ENCODE measurements at regions of chr18 and their contacts with region 1.

Region 1: DNA sequence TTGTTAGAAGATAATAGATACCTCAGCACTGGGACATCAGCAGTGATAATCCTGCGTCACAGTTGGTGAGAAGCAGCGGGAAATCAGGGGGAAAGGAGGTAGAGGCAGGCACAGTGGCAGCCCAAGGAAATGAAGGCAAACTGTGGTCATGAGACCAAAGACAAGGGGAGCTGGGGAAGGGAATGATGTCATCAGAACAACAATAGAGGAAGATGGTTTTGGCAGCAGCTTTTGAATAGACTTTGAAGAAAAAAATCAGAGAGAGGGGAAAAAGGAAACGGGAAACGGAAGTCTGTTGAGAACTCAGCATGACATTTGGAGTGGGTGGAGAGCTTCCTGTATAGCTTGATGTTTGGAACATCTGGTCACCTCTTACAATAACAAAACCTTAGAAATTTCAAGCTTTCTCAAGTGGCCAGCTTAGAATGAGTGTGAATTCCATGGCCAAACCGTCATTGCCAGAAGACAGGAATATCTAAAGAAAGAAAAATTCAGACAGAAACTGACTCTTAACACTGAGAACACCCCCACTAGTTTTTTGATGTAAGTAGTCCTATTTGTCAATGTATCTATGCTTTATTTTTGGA is 18.4 kb upstream of the YES1 start:
- DNase-seq: peak in 1 of 2 donors; percentile 80
- ATAC-seq: peak; percentile 63 to 67 (median 65)
- H3K4me3 ChIP-seq: no peak overlapping the region
- H3K4me3 Mint-ChIP-seq: peak overlapping the region; percentile 58
- H3K27ac ChIP-seq: peak overlapping the region; percentile 46
- H3K27ac Mint-ChIP-seq: peak overlapping the region; percentile 78 to 87
- H3K4me1 ChIP-seq: peaks cover 14% of the 10 kb centered on the region
- H3K4me1 Mint-ChIP-seq: peaks cover 13 to 14% of the 10 kb centered on the region in 2 donors
- H3K27me3 ChIP-seq: no peaks in the 10 kb centered on the region
- H3K27me3 Mint-ChIP-seq: peaks cover 0 to 3% of the 10 kb centered on the region in 2 donors
- CTCF ChIP-seq: no peak

Region 2: GRCh38 chr18:623761-624620 is 206.4 kb before region 1 on chr18:
- intact Hi-C with region 1: loop called (anchors 2 kb)
- DNase-seq: peak; percentile 31 to 76
- ATAC-seq: peak; percentile 54 to 81 (median 72)
- H3K4me3 ChIP-seq: no peak overlapping the region
- H3K4me3 Mint-ChIP-seq: no peak overlapping the region
- H3K27ac ChIP-seq: no peak overlapping the region
- H3K27ac Mint-ChIP-seq: no peak overlapping the region
- H3K4me1 ChIP-seq: no peaks in the 10 kb centered on the region
- H3K4me1 Mint-ChIP-seq: no peaks in the 10 kb centered on the region
- H3K27me3 ChIP-seq: no peaks in the 10 kb centered on the region
- H3K27me3 Mint-ChIP-seq: peaks cover 7 to 12% of the 10 kb centered on the region in 2 donors
- CTCF ChIP-seq: peak; percentile 66

Region 3: GRCh38 chr18:697800-698199 is 132.6 kb before region 1 on chr18:
- intact Hi-C with region 1: no loop called
- DNase-seq: no peak
- ATAC-seq: no peak
- H3K4me3 ChIP-seq: no peak overlapping the region
- H3K4me3 Mint-ChIP-seq: no peak overlapping the region
- H3K27ac ChIP-seq: no peak overlapping the region
- H3K27ac Mint-ChIP-seq: no peak overlapping the region
- H3K4me1 ChIP-seq: no peaks in the 10 kb centered on the region
- H3K4me1 Mint-ChIP-seq: peaks cover 0 to 6% of the 10 kb centered on the region in 2 donors
- H3K27me3 ChIP-seq: no peaks in the 10 kb centered on the region
- H3K27me3 Mint-ChIP-seq: no peaks in the 10 kb centered on the region
- CTCF ChIP-seq: no peak

Region 4: GRCh38 chr18:711657-712400 is 118.6 kb before region 1 on chr18:
- intact Hi-C with region 1: loop called (anchors 1 kb)
- DNase-seq: peak; percentile 75 to 91
- ATAC-seq: peak; percentile 68 to 83 (median 75)
- H3K4me3 ChIP-seq: peak overlapping the region; percentile 52
- H3K4me3 Mint-ChIP-seq: peak overlapping the region; percentile 95
- H3K27ac ChIP-seq: peak overlapping the region; percentile 73
- H3K27ac Mint-ChIP-seq: peak overlapping the region; percentile 96 to 97
- H3K4me1 ChIP-seq: peaks cover 17% of the 10 kb centered on the region
- H3K4me1 Mint-ChIP-seq: peaks cover 17 to 26% of the 10 kb centered on the region in 2 donors
- H3K27me3 ChIP-seq: no peaks in the 10 kb centered on the region
- H3K27me3 Mint-ChIP-seq: no peaks in the 10 kb centered on the region
- CTCF ChIP-seq: no peak

Region 5: DNA sequence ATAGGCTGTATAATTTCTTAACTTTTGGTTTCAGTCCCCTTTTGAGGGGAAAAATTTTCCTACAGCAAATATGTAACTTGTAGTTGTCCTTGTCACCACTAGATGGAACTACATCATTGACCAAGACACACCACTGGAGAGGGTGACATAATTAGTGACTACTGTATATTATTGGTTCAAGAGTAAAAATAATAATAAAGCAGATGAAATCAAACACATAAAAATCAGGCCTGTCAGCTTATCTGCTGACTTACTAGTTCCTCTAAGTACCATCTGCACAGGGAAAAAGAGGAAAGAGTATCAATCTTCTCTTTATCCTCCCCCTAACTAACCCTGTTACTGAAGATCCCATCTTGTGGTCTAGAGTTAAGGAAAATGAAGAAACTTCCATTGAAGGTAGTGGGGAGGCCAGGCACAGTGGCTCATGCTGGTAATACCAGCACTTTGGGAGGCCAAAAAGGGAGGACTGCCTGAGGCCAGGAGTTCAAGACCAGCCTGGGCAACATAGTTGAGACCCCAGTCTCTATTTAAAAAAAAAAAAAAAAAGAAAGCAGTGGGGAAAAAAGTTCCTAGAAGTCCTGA is 88.4 kb before region 1 on chr18:
- intact Hi-C with region 1: loop called (anchors 1 kb)
- DNase-seq: peak in 1 of 2 donors; percentile 73
- ATAC-seq: peak; percentile 81 to 89 (median 83)
- H3K4me3 ChIP-seq: no peak overlapping the region
- H3K4me3 Mint-ChIP-seq: no peak overlapping the region
- H3K27ac ChIP-seq: peak overlapping the region; percentile 9
- H3K27ac Mint-ChIP-seq: peak overlapping the region; percentile 45 to 49
- H3K4me1 ChIP-seq: peaks cover 2% of the 10 kb centered on the region
- H3K4me1 Mint-ChIP-seq: peaks cover 5 to 13% of the 10 kb centered on the region in 2 donors
- H3K27me3 ChIP-seq: no peaks in the 10 kb centered on the region
- H3K27me3 Mint-ChIP-seq: no peaks in the 10 kb centered on the region
- CTCF ChIP-seq: peak; percentile 77

Region 6: GRCh38 chr18:785242-785641 is 45.2 kb before region 1 on chr18:
- intact Hi-C with region 1: loop called (anchors 5 kb)
- DNase-seq: no peak
- ATAC-seq: peak in 2 of 3 donors; percentile 8 to 13
- H3K4me3 ChIP-seq: no peak overlapping the region
- H3K4me3 Mint-ChIP-seq: peak overlapping the region; percentile 38
- H3K27ac ChIP-seq: no peak overlapping the region
- H3K27ac Mint-ChIP-seq: peak overlapping the region; percentile 28 to 54
- H3K4me1 ChIP-seq: peaks cover 10% of the 10 kb centered on the region
- H3K4me1 Mint-ChIP-seq: peaks cover 62 to 65% of the 10 kb centered on the region in 2 donors
- H3K27me3 ChIP-seq: no peaks in the 10 kb centered on the region
- H3K27me3 Mint-ChIP-seq: no peaks in the 10 kb centered on the region
- CTCF ChIP-seq: no peak

Region 7: DNA sequence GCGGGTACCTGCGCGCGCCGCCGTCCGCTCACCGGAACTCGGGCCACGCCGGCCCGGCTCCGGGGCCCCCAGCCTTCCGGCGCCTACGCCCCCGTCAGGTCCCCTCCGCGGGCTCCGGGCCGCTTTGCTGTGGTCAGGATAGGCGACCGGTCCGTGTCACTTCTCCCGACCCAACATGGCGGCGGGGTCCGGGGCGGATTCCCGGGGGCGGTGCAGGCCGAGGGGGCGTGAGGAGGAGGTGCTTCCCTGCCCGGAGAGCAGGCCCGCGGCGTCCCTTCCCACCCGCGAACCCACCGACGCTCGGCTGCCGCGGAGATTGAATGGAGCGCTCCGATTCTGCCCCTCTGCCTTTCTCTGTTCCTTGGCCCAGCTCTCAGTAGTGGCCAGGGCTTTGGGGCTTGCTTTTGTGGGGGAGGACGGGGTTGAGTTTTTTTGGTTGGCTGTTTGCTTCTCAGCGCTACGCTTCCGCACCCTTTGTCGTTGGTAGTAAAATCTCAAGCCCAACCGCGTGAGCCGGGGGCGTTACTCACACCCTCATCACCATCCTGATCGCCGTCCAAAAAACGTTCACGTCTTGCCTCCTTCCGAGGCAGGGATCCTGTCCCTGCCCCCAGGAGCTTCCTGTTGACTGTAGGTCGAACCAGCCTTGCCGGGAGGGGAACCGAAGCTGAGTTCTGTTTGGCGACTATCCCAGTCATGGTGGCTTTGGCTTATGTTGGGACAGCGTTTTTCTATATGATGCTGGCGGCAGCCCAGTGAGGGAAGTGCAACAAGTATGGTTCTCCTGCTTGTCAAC is 17.8 kb before region 1 on chr18:
- intact Hi-C with region 1: loop called (anchors 1 kb)
- DNase-seq: peak; percentile 87 to 88
- ATAC-seq: peak; percentile 62 to 82 (median 70)
- H3K4me3 ChIP-seq: peak overlapping the region; percentile 95
- H3K4me3 Mint-ChIP-seq: peak overlapping the region; percentile 98
- H3K27ac ChIP-seq: peak overlapping the region; percentile 93
- H3K27ac Mint-ChIP-seq: peak overlapping the region; percentile 98 to 99
- H3K4me1 ChIP-seq: peaks cover 40% of the 10 kb centered on the region
- H3K4me1 Mint-ChIP-seq: peaks cover 74 to 75% of the 10 kb centered on the region in 2 donors
- H3K27me3 ChIP-seq: no peaks in the 10 kb centered on the region
- H3K27me3 Mint-ChIP-seq: no peaks in the 10 kb centered on the region
- CTCF ChIP-seq: no peak

Region 8: GRCh38 chr18:1930291-1931270 is 1100.2 kb after region 1 on chr18:
- intact Hi-C with region 1: no loop called
- DNase-seq: no peak
- ATAC-seq: no peak
- H3K4me3 ChIP-seq: no peak overlapping the region
- H3K4me3 Mint-ChIP-seq: no peak overlapping the region
- H3K27ac ChIP-seq: no peak overlapping the region
- H3K27ac Mint-ChIP-seq: no peak overlapping the region
- H3K4me1 ChIP-seq: no peaks in the 10 kb centered on the region
- H3K4me1 Mint-ChIP-seq: no peaks in the 10 kb centered on the region
- H3K27me3 ChIP-seq: no peaks in the 10 kb centered on the region
- H3K27me3 Mint-ChIP-seq: peaks cover 0 to 2% of the 10 kb centered on the region in 2 donors
- CTCF ChIP-seq: no peak

Measured in natural killer cell (primary cell).